Natural killer cell (primary cell): ENCODE measurements at regions of chr14 and their contacts with region 1.

Region 1: GRCh38 chr14:74612350-74613021 is 449 bp upstream of the LTBP2 start:
- DNase-seq: peak; percentile 89 to 94
- ATAC-seq: peak; percentile 83 to 96 (median 89)
- H3K4me3 ChIP-seq: peak overlapping the region; percentile 54
- H3K4me3 Mint-ChIP-seq: peak overlapping the region; percentile 84
- H3K27ac ChIP-seq: no peak overlapping the region
- H3K27ac Mint-ChIP-seq: no peak overlapping the region
- H3K4me1 ChIP-seq: peaks cover 56% of the 10 kb centered on the region
- H3K4me1 Mint-ChIP-seq: peaks cover 50 to 63% of the 10 kb centered on the region in 2 donors
- H3K27me3 ChIP-seq: no peaks in the 10 kb centered on the region
- H3K27me3 Mint-ChIP-seq: no peaks in the 10 kb centered on the region
- CTCF ChIP-seq: peak; percentile 58

Region 2: DNA sequence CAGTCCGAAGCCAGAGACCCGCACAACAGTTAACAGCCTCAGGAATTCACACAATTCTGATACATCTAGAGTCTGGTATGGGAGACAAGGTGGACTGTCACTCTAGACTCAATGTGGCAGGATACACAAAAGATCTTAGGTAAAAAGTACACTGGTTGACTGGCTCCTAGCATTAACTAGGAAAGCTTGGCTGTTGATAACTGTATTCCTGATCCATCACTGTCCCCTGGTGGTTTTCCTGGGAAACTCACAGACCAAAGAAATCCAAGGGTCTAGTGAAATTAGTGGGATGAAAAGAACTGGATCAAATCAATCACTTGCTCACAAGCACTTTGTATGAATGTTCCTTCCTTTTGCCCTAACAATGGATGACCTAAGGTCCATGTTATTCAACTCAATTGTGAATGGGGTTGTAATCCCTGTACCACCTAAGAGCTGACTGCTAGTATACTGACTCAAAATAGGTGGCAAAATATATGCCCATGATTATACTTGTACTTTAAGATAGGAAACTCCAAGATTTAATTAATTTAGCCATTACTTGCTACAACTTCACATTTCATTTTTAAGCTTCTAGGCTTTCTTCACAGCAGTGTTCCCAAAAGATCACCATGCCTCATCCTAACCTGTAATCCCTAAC is 133.4 kb before region 1 on chr14:
- intact Hi-C with region 1: no loop called
- DNase-seq: peak in 1 of 2 donors; percentile 17
- ATAC-seq: no peak
- H3K4me3 ChIP-seq: no peak overlapping the region
- H3K4me3 Mint-ChIP-seq: no peak overlapping the region
- H3K27ac ChIP-seq: no peak overlapping the region
- H3K27ac Mint-ChIP-seq: no peak overlapping the region
- H3K4me1 ChIP-seq: no peaks in the 10 kb centered on the region
- H3K4me1 Mint-ChIP-seq: no peaks in the 10 kb centered on the region
- H3K27me3 ChIP-seq: no peaks in the 10 kb centered on the region
- H3K27me3 Mint-ChIP-seq: no peaks in the 10 kb centered on the region
- CTCF ChIP-seq: no peak

Region 3: DNA sequence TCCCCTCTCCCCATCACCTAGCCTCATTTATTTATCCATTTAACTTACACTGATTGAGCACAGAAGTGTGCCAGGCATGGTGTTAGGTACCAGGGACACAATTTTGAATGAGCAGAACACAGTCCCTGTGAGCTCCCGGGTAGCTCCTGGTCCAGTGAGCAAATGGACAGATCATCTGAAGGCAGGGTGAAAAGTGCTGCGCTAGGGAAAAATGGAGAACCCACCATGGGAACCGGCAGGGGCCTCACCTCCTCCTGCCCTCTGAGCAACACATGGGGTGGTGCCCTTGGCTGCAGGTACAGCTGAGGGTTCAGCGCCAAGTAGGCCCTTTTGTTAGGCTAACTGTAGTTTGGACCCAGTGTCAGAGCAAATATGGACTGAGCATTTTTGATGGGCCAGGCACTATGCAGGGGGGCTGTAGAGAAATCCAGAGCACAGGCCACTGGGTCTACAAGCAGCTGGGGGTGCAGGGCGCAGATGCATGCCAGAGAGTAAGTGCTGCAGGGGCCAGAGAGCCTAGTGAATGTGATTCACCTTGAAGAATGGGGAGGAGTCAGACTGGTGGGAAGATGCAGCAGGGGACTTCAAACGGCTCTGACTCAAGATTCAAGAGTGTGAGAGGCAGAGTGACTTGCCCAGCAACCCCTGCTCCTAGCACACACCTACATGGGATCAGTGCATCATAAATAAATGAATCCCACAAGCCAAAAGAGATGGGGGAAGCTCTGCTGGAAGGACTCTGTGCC is 28.6 kb before region 1 on chr14:
- intact Hi-C with region 1: no loop called
- DNase-seq: no peak
- ATAC-seq: no peak
- H3K4me3 ChIP-seq: no peak overlapping the region
- H3K4me3 Mint-ChIP-seq: no peak overlapping the region
- H3K27ac ChIP-seq: no peak overlapping the region
- H3K27ac Mint-ChIP-seq: no peak overlapping the region
- H3K4me1 ChIP-seq: no peaks in the 10 kb centered on the region
- H3K4me1 Mint-ChIP-seq: peaks cover 0 to 7% of the 10 kb centered on the region in 2 donors
- H3K27me3 ChIP-seq: no peaks in the 10 kb centered on the region
- H3K27me3 Mint-ChIP-seq: peaks cover 67 to 79% of the 10 kb centered on the region in 2 donors
- CTCF ChIP-seq: no peak

Region 4: DNA sequence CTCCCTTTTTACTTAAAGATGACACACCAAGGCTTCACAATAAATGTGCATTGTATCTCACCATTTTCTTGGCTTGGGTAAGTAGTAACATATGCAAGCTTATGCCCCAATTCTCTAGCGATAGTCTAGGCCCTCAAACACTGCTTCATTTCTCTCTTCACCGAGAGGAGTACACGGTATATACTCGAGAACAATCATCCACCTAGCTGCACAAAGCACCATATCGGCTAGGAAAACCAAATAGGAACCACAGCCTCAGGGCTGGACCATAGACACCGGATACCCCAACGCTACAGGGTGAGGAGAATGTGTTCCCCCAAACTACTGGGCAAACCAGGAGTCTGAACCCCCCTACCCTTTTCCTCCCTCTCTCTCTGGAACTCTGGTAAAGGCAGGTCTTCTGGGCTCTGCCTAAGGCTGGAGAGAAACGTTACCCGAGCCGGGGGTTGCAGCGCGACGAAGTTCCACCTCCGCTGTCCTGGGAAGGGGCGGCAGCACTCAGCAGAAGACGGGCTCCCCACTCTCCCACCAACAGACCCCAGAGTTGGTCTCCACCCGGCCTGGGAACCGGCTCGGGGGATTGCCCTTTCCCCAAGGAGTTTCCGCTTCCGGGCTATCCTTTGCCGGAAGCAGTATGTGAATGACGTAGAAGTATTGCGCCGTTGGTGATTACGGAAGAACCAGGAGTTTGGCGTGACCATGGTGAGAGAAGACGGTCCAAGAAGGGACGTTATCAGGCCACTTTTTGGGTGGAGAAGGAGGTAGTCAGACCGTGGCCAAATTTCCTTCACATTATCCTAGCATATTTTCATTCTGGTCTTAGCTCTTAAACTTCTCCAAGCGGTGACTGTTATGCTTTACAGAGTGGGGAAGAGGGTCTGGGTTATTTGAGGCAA is 100.3 kb after region 1 on chr14 and contains the starts of genes AREL1 and FCF1:
- intact Hi-C with region 1: loop called (anchors 1 kb)
- DNase-seq: peak; percentile 74 to 94
- ATAC-seq: peak; percentile 92 to 94 (median 93)
- H3K4me3 ChIP-seq: peak within 1 kb of the TSS; percentile 76
- H3K4me3 Mint-ChIP-seq: peak within 1 kb of the TSS; percentile 97
- H3K27ac ChIP-seq: peak within 1 kb of the TSS; percentile 87
- H3K27ac Mint-ChIP-seq: peak within 1 kb of the TSS; percentile 97 to 99
- H3K4me1 ChIP-seq: peaks cover 7% of the 10 kb centered on the region
- H3K4me1 Mint-ChIP-seq: peaks cover 50 to 54% of the 10 kb centered on the region in 2 donors
- H3K27me3 ChIP-seq: no peaks in the 10 kb centered on the region
- H3K27me3 Mint-ChIP-seq: no peaks in the 10 kb centered on the region
- CTCF ChIP-seq: no peak
- total RNA-seq, gene AREL1: 65.9 to 83.0 (median 82.3) TPM
- total RNA-seq, gene FCF1: 37.1 to 49.6 (median 40.4) TPM

Region 5: DNA sequence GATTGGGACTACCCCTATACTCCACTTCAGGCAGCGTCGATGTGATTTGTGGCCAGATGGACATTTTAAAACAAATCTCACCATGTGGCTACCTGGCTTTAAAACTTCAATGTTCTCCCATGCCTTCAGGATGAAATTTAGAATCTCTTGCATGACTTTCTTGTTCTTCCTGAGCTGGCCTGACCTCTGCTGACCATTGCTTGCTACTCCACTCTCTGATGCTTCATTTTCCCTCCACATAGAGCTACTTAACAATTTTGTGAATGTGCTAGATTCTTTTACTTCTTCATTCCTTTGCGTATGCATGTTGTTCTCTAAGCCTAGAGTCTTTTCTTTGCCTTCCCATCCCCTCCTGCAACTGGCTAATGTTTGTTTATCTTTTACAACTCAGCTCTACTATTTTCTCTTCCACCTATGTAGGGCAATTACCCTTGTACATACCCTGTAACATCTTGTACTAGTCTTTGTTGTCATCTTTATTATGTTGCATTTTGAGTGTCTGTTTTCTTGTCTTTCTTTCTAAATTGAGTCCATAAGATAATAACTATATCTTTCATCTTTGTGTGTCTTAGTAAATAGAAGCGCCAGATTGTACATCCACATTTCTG is 191.8 kb after region 1 on chr14:
- intact Hi-C with region 1: loop called (anchors 1 kb)
- DNase-seq: peak in 1 of 2 donors; percentile 52
- ATAC-seq: peak; percentile 50 to 79 (median 71)
- H3K4me3 ChIP-seq: no peak overlapping the region
- H3K4me3 Mint-ChIP-seq: no peak overlapping the region
- H3K27ac ChIP-seq: no peak overlapping the region
- H3K27ac Mint-ChIP-seq: peak overlapping the region in 1 of 2 donors; percentile 0
- H3K4me1 ChIP-seq: no peaks in the 10 kb centered on the region
- H3K4me1 Mint-ChIP-seq: peaks cover 0 to 5% of the 10 kb centered on the region in 2 donors
- H3K27me3 ChIP-seq: no peaks in the 10 kb centered on the region
- H3K27me3 Mint-ChIP-seq: no peaks in the 10 kb centered on the region
- CTCF ChIP-seq: peak; percentile 65

Region 6: DNA sequence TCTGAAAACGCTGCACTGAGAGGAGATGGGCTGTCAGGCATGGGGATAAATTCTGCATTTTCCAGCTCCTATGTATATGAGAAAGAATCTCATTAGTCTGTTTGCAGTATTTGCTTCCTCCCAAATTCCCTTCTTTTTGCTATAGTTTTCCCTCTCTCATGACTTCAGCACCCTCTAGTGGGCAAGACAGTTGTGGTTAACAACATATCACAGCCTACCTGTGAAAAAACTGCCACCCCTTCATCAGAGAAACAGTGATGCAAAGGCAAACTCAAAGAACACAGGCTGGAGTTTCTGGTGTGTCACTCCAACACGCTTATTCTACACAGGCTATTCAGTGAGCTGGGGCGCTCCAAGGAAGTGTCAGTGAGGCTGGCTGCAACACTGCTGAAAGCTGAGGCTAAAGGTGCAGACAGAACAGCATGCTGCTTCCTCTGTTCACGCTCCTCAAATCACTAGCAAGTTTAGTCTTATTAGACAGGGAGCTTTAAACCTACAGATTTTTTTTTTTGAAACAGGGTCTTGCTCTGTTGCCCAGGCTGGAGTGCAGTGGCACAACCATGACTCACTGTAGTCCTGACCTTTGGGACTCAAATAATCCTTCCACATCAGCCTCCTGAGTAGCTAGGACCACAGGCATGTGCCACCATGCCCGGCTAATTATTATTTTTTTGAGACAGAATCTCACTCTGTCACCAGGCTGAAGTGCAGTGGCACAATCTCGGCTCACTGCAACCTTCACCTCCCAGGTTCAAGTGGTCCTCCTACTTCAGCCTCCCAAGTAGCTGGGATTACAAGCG is 476.3 kb after region 1 on chr14:
- intact Hi-C with region 1: loop called (anchors 1 kb)
- DNase-seq: peak in 1 of 2 donors; percentile 75
- ATAC-seq: peak; percentile 55 to 77 (median 76)
- H3K4me3 ChIP-seq: no peak overlapping the region
- H3K4me3 Mint-ChIP-seq: no peak overlapping the region
- H3K27ac ChIP-seq: no peak overlapping the region
- H3K27ac Mint-ChIP-seq: no peak overlapping the region
- H3K4me1 ChIP-seq: no peaks in the 10 kb centered on the region
- H3K4me1 Mint-ChIP-seq: no peaks in the 10 kb centered on the region
- H3K27me3 ChIP-seq: no peaks in the 10 kb centered on the region
- H3K27me3 Mint-ChIP-seq: no peaks in the 10 kb centered on the region
- CTCF ChIP-seq: peak; percentile 70

Region 7: DNA sequence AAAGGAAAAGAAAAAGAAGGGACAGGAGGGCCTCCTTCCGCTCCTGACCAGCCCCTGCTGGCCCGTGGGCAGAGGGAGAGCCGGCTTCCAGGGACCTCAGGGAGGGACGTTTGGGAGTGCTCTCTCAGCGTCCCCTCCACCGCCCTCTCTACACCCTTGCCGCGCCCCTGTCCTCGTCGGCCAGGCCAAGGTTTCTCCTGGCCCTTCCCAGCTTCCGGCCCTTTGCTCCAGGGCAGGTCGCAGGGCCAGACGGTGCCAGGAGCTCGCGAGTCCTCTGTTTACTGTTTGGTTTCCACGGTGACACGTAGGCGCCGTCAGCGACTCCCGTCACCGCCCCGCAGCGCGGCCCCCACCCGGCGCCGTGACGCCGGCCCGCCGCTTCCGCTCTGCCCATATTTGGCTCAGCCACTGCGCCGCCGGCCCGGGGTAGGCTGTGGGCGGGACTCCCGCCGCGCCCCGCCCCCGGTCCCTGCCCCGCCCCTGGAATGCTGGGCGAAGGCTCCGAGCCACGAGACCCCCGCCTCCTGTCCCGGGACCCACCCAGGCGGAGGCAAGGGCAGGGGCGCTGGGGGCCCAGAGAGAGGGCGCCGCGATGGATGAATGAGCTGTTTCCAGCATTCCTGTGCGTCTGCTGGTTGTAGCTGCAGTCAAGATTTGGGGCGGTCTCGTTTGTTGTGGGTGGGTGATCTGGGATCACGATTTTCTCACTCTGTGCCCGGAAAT is 681.6 kb after region 1 on chr14:
- intact Hi-C with region 1: loop called (anchors 10 kb)
- DNase-seq: peak; percentile 95 to 99
- ATAC-seq: peak; percentile 79 to 95 (median 86)
- H3K4me3 ChIP-seq: peak overlapping the region; percentile 66
- H3K4me3 Mint-ChIP-seq: peak overlapping the region; percentile 98
- H3K27ac ChIP-seq: peak overlapping the region; percentile 94
- H3K27ac Mint-ChIP-seq: peak overlapping the region; percentile 89 to 96
- H3K4me1 ChIP-seq: peaks cover 33% of the 10 kb centered on the region
- H3K4me1 Mint-ChIP-seq: peaks cover 11 to 19% of the 10 kb centered on the region in 2 donors
- H3K27me3 ChIP-seq: no peaks in the 10 kb centered on the region
- H3K27me3 Mint-ChIP-seq: peaks cover 8 to 9% of the 10 kb centered on the region in 2 donors
- CTCF ChIP-seq: no peak